ENCODE measurements at regions of chr10 and their contacts with region 1.

Region 1: GRCh38 chr10:23994479-23995046 is 214.4 kb upstream of the KIAA1217 start:
- DNase-seq: peak; percentile 52
- ATAC-seq: peak; percentile 91

Region 2: DNA sequence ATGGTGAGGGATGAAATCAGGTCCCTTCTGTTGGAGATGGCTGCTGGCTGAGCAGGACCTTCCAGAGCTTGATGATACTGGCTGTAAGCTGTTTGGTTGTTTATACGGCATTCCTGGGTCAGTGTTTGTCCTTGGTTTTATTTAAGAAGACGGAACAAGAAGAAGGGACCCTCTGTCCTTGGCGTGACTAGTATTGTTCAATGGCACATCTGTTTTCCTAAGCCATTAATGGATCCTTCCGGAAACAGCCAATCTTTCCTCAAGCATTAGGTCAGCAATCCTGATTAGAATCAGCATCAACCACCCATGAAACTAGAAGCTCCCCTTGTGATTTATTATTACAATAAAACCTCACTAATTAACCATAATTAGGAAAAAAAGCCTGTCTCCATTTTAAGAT is 85.6 kb after region 1 on chr10:
- intact Hi-C with region 1: no loop called
- DNase-seq: no peak
- ATAC-seq: no peak

Region 3: DNA sequence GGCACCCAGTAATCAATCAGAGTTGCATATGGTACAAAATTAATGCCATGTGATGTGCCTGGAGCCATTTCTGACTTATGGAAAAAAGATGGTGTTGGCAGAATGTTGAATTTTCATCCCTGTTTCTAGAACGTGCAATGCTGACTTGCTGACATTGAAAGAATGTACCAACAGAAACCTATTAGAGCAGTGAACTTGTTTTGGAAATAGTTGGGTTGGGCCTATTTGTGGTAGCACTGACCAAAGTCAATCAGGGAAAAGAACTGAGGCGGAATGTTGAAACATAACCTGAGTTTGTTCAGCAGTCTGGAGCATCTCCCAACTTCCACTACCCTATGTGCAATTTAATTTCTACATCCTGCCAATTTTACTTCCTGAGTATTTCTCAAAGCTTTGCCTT is 202.7 kb after region 1 on chr10:
- intact Hi-C with region 1: loop called (anchors 5 kb)
- DNase-seq: no peak
- ATAC-seq: no peak

Region 4: GRCh38 chr10:24357344-24358004 is 362.9 kb after region 1 on chr10:
- intact Hi-C with region 1: loop called (anchors 5 kb)
- DNase-seq: no peak
- ATAC-seq: peak; percentile 45

Region 5: DNA sequence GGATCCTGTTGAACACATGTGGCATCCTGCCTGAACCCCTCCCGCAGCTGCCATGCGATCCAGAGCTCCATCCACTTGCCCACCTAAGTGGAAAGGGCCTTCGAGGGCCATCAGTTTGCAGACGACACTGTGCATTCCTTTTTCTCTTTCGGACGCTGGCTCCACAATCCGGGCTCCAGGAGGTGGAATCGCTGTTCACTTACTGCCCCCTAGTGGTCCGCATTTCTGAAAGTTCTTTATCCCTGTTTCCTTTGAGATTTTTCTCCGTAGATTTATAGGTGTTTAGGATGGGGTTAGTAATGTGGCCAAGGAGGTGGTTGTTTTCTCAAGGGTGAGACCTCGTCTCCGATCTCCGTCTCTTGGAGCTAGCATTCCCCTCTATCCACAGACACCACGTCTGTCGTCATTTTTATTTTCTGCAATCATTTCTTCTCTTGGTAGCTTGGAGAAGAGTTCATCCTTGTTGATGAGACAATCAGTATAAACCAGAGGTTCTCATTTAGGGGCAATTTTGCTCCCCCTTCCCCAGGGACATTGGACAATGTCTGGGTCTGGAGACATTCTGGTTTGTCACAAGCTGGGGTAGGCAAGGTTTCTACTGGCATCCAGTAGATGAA is 524.5 kb after region 1 on chr10:
- intact Hi-C with region 1: loop called (anchors 5 kb)
- DNase-seq: no peak
- ATAC-seq: peak; percentile 81